Lower leg skin (tissue), 4 donors: ENCODE measurements at regions of chr15 and their contacts with region 1.

Region 1: DNA sequence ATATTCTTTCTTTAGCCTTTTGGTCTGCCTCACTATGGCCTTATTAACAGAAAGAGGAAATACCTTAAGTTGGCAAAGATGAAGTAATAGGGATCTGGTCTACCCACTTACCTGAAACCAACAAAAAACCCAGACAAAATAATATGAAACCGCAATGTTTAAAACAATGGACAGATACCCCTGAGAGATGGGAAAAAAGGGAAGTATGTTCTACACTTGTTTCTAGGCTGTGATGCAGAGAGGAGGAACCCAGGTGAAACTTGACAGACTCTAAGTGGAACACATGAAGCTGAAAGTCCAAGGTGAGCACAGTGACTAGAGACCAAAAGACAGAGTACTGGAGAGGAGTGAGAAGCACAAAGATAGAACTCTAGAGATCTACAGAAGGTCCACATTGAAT is 78.4 kb downstream of the NR2E3 start:
- DNase-seq: no peak
- H3K4me3 ChIP-seq: no peak overlapping the region
- CTCF ChIP-seq: no peak
- POLR2A ChIP-seq: no peak

Region 2: DNA sequence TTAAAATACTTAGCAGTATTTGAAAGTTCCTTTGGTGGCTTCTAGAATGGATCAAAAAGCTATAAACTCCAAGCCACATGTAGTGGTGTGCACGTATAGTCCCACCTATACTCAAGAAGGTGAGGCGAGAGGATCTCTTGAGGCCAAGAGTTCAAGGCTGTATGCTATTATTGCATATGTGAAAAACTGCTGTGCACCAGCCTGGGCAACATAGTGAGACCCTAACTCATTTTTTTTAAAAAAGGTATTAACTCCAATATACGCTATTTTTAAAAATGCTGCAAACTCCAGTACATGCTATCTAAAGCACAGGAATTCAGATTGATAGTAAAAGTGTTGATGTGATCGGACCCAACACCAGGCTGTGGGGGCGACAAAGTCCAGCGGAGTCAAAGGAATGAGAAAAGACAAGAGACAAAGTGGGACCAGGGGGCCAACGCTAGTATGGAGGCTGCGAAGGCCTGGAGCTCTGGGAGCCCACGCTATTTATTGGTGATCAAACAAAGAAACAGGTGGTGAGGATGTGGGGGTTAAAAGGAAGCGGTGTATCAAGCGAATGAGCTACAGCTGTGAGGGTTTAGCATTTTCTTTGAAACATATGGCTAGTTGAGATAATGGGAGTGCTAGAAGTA is 651.9 kb after region 1 on chr15:
- intact Hi-C with region 1: loop called (anchors 10 kb)
- DNase-seq: no peak
- H3K4me3 ChIP-seq: no peak overlapping the region
- CTCF ChIP-seq: no peak
- POLR2A ChIP-seq: no peak